IMR-90 (cell line): ENCODE measurements at regions of chr17 and their contacts with region 1.

Region 1: GRCh38 chr17:57243171-57243948 is 13.0 kb upstream of the MSI2 start:
- DNase-seq: peak; percentile 60
- ATAC-seq: peak; percentile 96
- H3K4me3 ChIP-seq: no peak overlapping the region
- H3K27ac ChIP-seq: no peak overlapping the region
- H3K4me1 ChIP-seq: no peaks in the 10 kb centered on the region
- H3K27me3 ChIP-seq: peaks cover 12% of the 10 kb centered on the region
- CTCF ChIP-seq: peak; percentile 100
- POLR2A ChIP-seq: no peak
- RAD21 ChIP-seq: peak; percentile 96

Region 2: GRCh38 chr17:56863974-56864373 is 379.4 kb before region 1 on chr17:
- CTCF ChIA-PET with region 1: no interaction called
- POLR2A ChIA-PET with region 1: no interaction called
- dilution Hi-C with region 1: no loop called
- in situ Hi-C with region 1: no loop called
- intact Hi-C with region 1: no loop called
- DNase-seq: no peak
- ATAC-seq: no peak
- H3K4me3 ChIP-seq: no peak overlapping the region
- H3K27ac ChIP-seq: no peak overlapping the region
- H3K4me1 ChIP-seq: peaks cover 4% of the 10 kb centered on the region
- H3K27me3 ChIP-seq: no peaks in the 10 kb centered on the region
- CTCF ChIP-seq: no peak
- POLR2A ChIP-seq: no peak
- RAD21 ChIP-seq: no peak

Region 3: DNA sequence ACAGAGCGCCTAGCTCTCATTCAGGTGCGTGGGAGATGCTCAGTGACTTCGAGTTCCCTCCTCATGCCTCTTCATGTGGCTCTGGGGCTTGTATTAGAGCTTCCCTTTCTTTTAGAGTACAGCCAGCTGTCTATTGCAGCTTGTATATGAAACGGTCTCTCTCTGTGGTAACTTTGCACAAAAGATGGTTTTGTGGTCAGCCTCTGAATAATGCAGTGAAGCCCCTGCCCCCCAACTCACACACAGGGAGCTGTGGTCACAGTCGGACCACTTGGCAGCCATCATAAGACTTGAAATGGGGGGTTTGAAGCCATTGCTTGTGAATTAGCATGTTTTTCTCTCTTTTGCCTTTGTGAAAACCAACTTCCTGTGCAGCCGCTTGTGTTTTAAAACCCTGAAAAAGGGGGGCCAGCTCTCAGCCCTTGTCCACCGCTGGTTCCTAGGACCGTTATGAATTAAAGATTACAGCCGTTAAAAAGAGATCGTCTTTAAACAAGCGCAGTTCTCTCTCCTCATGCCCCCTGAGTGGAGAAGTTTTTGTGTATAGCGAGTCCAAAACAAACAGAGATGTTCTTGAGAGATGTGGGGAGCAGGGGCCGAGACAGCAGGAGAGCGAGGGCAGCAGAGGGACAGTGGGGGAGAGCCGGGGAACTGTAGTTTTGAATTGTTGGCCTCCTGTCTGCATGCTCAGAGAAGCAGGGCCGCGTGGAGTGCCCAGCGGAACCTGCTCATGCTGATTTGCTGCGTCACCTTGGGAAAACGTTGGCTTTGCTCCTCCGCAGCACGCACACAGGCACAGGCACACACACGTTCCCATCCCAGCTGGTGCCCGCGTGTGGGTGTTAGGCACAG is 211.9 kb after region 1 on chr17:
- CTCF ChIA-PET with region 1: no interaction called
- POLR2A ChIA-PET with region 1: no interaction called
- dilution Hi-C with region 1: no loop called
- in situ Hi-C with region 1: no loop called
- intact Hi-C with region 1: no loop called
- DNase-seq: peak; percentile 57
- ATAC-seq: peak; percentile 42
- H3K4me3 ChIP-seq: no peak overlapping the region
- H3K27ac ChIP-seq: no peak overlapping the region
- H3K4me1 ChIP-seq: peaks cover 9% of the 10 kb centered on the region
- H3K27me3 ChIP-seq: no peaks in the 10 kb centered on the region
- CTCF ChIP-seq: no peak
- POLR2A ChIP-seq: no peak
- RAD21 ChIP-seq: no peak

Region 4: DNA sequence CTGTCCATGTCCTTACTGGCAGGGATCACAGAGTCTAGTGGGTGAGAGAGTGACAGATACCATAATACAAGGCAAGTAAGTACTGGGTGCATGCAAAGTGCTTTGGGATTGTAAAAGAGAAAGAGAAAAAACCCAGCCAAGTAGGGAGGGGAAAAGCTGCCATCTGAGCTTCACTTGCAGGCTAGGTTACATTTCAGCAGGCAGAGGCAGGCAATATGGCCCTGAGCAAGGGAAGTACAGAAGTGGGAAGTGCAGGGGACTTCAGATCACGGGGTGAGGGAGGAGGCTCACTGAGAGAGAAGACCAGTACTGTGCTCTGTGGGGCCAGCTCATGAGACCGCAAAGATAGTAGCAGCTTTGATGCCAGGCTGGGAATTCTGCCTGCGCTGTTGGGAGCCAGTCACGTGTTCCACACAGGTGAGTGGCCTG is 243.5 kb after region 1 on chr17:
- CTCF ChIA-PET with region 1: interaction called, 10 read pairs
- POLR2A ChIA-PET with region 1: no interaction called
- dilution Hi-C with region 1: no loop called
- in situ Hi-C with region 1: no loop called
- intact Hi-C with region 1: no loop called
- DNase-seq: no peak
- ATAC-seq: no peak
- H3K4me3 ChIP-seq: no peak overlapping the region
- H3K27ac ChIP-seq: no peak overlapping the region
- H3K4me1 ChIP-seq: peaks cover 33% of the 10 kb centered on the region
- H3K27me3 ChIP-seq: no peaks in the 10 kb centered on the region; the same call in 1 of the 2 replicates
- CTCF ChIP-seq: no peak
- POLR2A ChIP-seq: no peak
- RAD21 ChIP-seq: no peak

Region 5: DNA sequence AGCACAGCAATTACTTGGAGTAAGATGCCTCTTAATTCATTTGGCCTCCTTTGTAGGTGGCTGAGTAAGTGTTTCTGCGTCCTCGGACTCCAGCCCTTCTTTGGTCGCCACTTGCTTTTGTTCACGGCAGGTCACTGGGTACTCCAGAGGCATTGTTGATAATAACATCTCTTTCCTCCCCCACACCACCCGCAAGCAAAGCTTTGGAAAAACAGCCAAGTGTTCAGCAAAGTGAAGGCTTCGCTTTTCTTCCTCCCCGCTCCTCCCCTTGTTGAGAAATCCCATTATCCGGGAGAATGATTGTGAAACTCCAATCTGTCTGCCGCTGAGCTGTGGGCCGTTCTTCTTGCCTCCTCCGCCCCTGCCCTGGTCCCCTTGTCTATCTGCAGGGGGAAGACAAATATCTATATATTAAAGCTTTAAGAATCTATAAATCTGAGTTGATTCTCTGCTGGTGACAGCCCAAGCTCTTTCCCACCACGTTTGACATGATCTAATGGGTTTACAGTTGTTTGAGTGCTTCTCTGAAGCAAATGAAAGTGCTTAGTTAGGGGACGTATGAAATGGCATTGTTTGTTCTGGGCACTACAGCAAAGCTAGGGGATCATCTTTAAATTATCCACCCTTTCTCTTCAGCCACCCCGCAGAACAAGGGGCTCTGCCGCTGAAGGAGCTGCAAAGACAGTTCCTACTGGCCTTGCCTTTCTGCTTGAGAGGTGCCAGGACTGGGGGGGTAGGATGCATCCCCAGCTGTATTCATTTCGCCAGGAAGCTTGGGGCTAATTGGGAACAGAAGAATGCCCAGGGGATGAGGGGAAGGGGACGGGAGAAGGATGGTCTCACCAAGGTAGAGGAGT is 334.6 kb after region 1 on chr17:
- CTCF ChIA-PET with region 1: interaction called, 4 read pairs
- POLR2A ChIA-PET with region 1: no interaction called
- dilution Hi-C with region 1: no loop called
- in situ Hi-C with region 1: loop called (anchors 10 kb)
- intact Hi-C with region 1: loop called (anchors 5 kb)
- DNase-seq: peak; percentile 70
- ATAC-seq: peak; percentile 92
- H3K4me3 ChIP-seq: peak overlapping the region; percentile 43
- H3K27ac ChIP-seq: peak overlapping the region; percentile 75; the same call in 1 of the 2 replicates
- H3K4me1 ChIP-seq: peaks cover 5% of the 10 kb centered on the region
- H3K27me3 ChIP-seq: no peaks in the 10 kb centered on the region
- CTCF ChIP-seq: no peak
- POLR2A ChIP-seq: no peak
- RAD21 ChIP-seq: no peak

Region 6: DNA sequence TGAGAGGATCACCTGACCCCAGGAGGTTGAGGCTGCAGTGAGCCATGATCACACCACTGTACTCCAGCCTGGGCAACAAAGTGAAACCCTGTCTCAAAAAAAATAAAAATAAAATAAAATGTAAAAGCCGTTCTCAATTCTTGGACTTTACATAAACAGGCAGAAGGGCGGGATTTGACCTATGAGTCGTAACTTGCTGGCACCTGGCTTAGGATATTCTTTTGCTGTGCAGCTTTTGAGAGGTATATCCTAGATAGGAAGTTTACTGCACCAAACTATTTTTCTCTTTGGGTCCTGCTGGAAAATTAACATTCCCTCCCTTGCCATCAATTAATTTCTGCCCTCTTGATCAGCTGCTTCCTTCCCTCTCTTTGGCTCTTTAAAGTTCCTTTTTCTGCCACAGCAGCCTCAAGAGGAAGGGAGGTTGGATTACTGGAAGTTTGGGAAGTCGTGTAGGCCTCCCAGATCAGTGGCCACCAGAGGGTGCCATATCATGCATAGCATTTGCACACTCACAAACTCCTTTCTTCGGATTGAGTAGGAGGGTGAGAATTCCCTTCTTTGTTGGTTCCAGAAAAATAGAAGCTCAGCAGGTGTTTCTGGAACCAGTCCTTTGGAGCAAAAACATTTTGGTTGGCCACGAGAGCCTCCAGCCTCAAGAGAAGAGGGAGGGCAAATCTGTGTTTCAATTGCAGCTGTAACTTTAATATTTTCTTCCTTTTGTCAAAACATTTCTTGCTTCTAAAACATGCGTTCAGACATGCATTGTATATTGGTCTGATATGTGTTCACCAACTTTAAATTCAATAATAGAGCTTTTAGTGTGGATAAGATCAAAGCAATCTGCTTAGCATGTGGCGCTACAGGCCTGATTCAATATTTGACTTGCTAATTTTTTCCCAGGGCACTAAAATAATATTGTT is 354.4 kb after region 1 on chr17:
- CTCF ChIA-PET with region 1: interaction called, 10 read pairs
- POLR2A ChIA-PET with region 1: no interaction called
- dilution Hi-C with region 1: no loop called
- in situ Hi-C with region 1: no loop called
- intact Hi-C with region 1: loop called (anchors 5 kb)
- DNase-seq: peak; percentile 82
- ATAC-seq: peak; percentile 88
- H3K4me3 ChIP-seq: no peak overlapping the region
- H3K27ac ChIP-seq: no peak overlapping the region
- H3K4me1 ChIP-seq: peaks cover 4% of the 10 kb centered on the region
- H3K27me3 ChIP-seq: no peaks in the 10 kb centered on the region
- CTCF ChIP-seq: peak; percentile 85
- POLR2A ChIP-seq: no peak
- RAD21 ChIP-seq: peak; percentile 85

Region 7: DNA sequence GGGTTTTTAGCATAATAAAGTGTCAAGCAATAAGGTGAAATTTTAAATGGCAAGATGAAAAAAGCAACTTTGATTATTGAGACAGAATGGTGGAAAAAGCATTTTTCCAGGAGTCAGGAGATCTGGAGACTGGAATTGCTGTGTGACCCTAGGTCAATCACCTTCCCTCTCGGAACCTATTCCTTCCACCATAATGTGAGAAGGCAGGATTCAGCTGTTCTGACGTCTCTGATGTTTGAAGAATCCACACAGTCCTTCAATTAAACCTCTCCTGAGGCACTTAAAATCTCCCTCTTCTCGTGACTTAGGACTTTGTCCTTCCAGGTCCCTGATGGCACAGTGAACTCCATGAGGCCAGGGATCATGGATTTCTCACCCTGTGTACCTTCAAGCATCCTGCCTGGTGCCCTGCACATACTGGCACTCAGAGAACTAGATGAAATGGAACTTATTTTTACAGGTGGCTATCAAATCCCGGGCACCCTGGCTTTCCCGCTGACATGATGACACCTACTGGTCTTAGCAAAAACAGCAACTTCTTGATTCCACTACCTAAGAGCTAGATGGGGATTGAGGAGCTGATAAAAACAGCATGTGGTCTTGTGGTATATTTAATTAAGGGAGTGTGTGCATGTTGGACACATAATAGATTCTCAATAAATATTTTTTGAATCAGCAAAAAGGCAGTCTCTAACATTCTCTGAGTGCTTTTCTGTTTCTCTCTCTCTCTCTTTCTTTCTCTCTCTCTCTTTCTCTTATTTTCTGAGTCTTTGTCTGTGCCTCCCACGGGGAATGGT is 504.1 kb after region 1 on chr17:
- CTCF ChIA-PET with region 1: interaction called, 14 read pairs
- POLR2A ChIA-PET with region 1: no interaction called
- dilution Hi-C with region 1: no loop called
- in situ Hi-C with region 1: loop called (anchors 10 kb)
- intact Hi-C with region 1: loop called (anchors 1 kb)
- DNase-seq: peak; percentile 73
- ATAC-seq: peak; percentile 93
- H3K4me3 ChIP-seq: no peak overlapping the region
- H3K27ac ChIP-seq: no peak overlapping the region
- H3K4me1 ChIP-seq: no peaks in the 10 kb centered on the region
- H3K27me3 ChIP-seq: peaks cover 38% of the 10 kb centered on the region
- CTCF ChIP-seq: peak; percentile 91
- POLR2A ChIP-seq: no peak
- RAD21 ChIP-seq: peak; percentile 91

Region 8: DNA sequence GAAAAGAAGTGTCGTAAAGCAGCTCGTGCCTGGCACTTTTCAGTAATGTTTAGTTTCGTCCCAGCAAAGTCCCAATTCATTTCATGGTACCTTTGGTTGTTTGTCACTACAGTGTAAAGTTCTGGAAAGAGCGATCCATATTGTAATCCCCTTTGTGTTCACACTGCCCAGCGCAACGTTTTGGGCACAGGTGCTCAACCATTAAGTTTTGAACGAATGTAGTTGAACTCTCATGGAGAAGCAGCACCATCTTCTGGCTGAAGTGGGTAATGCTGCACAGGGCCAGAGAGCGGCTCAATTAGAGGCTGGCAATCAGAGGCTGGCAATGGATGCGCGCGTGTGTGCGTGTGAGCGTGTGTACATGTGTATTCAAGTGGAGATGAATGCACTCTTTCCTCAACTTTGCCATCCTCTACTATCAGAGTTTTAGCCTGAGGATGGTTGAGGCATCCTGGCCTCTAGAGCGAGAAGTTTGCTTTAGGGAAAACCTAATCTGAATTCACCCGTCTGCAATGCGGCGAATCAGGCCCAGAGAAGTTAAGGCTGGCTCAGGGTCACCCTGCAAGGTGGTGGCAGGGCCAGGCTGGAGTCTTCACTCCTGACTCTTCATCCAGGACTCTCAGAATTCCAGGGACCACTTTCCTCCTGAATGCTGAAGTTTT is 869.7 kb after region 1 on chr17:
- CTCF ChIA-PET with region 1: no interaction called
- POLR2A ChIA-PET with region 1: no interaction called
- dilution Hi-C with region 1: no loop called
- in situ Hi-C with region 1: loop called (anchors 25 kb)
- intact Hi-C with region 1: no loop called
- DNase-seq: peak; percentile 60
- ATAC-seq: peak; percentile 96
- H3K4me3 ChIP-seq: no peak overlapping the region
- H3K27ac ChIP-seq: no peak overlapping the region
- H3K4me1 ChIP-seq: no peaks in the 10 kb centered on the region
- H3K27me3 ChIP-seq: peaks cover 22% of the 10 kb centered on the region
- CTCF ChIP-seq: peak; percentile 94
- POLR2A ChIP-seq: no peak
- RAD21 ChIP-seq: peak; percentile 93